ENCODE measurements at regions of chr6 and their contacts with region 1.

Region 1: GRCh38 chr6:68226460-68226859 is 408.6 kb upstream of the ADGRB3 start:
- DNase-seq: peak; percentile 41
- H3K4me3 Mint-ChIP-seq: no peak overlapping the region
- H3K27ac Mint-ChIP-seq: no peak overlapping the region
- H3K4me1 Mint-ChIP-seq: no peaks in the 10 kb centered on the region
- H3K27me3 Mint-ChIP-seq: no peaks in the 10 kb centered on the region
- CTCF ChIP-seq: peak; percentile 54

Region 2: DNA sequence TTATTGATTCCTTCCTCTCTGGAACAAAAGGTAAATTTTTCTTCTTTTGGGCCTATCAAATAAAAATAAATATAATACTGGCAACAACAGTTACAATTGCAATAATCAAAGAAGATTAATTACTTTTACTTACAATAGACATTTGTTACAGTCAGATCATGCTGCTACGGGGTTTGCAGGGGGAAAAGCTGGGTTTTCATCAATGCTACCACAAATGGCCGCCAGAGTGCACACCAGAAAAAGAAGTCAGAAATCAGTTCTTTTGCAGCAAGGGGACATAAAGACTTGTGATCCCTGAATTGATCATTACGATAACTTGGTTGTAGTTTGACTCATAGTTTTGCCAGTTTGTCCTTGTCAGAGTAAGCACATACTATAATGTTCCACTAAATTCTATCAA is 1804.9 kb before region 1 on chr6:
- CTCF ChIA-PET with region 1: no interaction called
- POLR2A ChIA-PET with region 1: no interaction called
- intact Hi-C with region 1: loop called (anchors 10 kb)
- DNase-seq: peak; percentile 8
- H3K4me3 Mint-ChIP-seq: no peak overlapping the region
- H3K27ac Mint-ChIP-seq: no peak overlapping the region
- H3K4me1 Mint-ChIP-seq: peaks cover 10% of the 10 kb centered on the region
- H3K27me3 Mint-ChIP-seq: no peaks in the 10 kb centered on the region
- CTCF ChIP-seq: peak; percentile 29

Region 3: DNA sequence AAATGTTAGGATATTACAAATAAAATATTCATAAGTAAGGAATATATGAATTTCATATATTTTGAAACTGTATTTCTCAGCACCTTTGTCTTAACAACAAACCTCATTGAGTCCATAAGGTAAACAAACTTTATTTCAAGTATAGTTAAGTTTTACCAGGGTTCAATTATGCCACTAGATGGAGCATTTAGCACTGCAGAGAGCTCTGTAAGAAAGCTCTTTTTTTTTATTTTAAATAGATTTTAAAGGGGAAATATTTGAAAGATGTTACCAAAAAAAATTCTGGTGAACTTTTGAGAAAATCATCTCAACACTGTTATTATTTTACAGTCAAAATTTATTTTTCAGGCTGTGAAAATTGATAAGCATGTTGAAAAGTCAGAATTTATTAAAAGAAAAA is 1564.3 kb before region 1 on chr6:
- CTCF ChIA-PET with region 1: interaction called, 4 read pairs
- POLR2A ChIA-PET with region 1: no interaction called
- intact Hi-C with region 1: loop called (anchors 1 kb)
- DNase-seq: peak; percentile 32
- H3K4me3 Mint-ChIP-seq: no peak overlapping the region
- H3K27ac Mint-ChIP-seq: no peak overlapping the region
- H3K4me1 Mint-ChIP-seq: no peaks in the 10 kb centered on the region
- H3K27me3 Mint-ChIP-seq: no peaks in the 10 kb centered on the region
- CTCF ChIP-seq: peak; percentile 61

Region 4: GRCh38 chr6:67068781-67069180 is 1157.7 kb before region 1 on chr6:
- CTCF ChIA-PET with region 1: interaction called, 4 read pairs
- POLR2A ChIA-PET with region 1: no interaction called
- intact Hi-C with region 1: loop called (anchors 10 kb)
- DNase-seq: no peak
- H3K4me3 Mint-ChIP-seq: no peak overlapping the region
- H3K27ac Mint-ChIP-seq: no peak overlapping the region
- H3K4me1 Mint-ChIP-seq: no peaks in the 10 kb centered on the region
- H3K27me3 Mint-ChIP-seq: no peaks in the 10 kb centered on the region
- CTCF ChIP-seq: no peak

Measured in MCF 10A (cell line).